GM10248 (cell line): ENCODE measurements at regions of chr11 and their contacts with region 1.

Region 1: DNA sequence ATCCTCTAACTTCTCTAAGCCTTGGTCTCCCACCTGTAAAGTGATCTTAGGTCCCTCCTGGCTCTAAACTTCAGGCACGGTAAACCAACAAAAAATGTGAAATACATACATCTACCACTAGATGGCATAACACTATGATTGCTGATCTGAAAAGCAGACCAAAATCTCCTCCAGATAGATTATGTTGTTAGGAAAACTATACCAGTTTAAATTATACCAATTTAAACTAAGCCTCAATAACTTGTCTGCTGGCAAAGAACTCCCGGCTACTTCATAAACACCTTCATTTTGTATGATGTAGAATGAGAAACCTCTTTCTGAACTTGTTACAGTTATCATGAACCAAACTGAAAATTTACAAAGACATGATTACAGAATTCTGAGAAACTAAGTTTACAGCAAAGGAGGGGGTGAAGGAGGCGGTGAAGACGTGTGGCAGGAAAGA is 85.9 kb downstream of the SBF2 start:
- DNase-seq: peak; percentile 52
- CTCF ChIP-seq: peak; percentile 67

Region 2: DNA sequence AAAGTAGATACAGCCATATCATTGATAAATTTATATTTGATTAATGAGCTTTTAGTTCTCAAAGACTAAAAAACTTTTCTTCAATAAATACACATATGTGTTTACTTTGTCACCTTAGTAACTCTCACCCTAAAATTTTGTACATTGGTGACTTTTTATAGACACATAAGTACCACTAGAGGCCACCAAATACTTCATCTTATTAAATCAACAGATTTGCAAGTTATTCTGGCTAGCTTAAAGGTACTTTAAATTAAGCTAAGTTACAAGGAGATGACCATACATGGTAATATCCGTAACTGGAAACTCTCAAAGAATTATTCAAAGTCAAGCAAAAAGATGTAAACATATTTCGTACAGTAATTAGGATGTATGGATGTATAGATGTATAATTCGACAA is 26.3 kb before region 1 on chr11:
- CTCF ChIA-PET with region 1: interaction called, 12 read pairs
- POLR2A ChIA-PET with region 1: no interaction called
- DNase-seq: peak; percentile 9
- CTCF ChIP-seq: no peak

Region 3: DNA sequence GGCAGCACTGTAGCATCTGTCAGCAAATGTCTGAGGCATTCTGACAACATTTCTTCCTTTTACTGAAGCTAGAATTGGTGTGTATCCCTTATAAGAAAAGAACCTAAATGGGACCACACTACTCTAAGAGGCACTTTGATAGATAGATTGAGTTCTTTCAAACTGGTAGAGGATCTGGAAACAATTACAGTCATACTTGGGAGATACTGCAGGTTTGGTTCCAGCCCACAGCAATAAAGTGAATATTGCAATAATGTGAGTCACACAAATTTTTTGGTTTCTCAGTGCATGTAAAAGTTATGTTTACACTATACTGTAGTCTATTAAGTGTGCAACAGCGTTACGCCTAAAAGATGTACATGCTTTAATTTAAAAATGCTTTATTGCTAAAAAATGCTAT is 11.1 kb before region 1 on chr11:
- CTCF ChIA-PET with region 1: interaction called, 19 read pairs
- POLR2A ChIA-PET with region 1: no interaction called
- DNase-seq: no peak
- CTCF ChIP-seq: no peak

Region 4: DNA sequence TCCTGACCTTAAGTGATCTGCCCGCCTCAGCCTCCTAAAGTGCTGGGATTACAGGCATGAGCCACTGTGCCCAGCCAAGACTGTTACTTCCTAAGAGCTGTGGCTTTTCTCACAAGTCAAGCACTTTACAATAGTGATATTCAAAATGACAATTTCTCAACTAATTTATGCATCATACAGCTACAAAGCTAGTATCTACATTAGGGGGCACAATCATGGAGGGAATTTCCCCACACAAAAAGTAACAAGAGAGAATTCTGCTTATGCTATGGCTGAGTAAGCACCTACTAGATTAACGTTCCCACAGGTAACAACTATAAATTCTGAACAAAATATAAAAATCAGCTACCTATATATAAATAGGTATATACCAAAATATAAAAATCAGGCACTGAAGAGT is 13.2 kb after region 1 on chr11:
- CTCF ChIA-PET with region 1: interaction called, 11 read pairs
- POLR2A ChIA-PET with region 1: no interaction called
- DNase-seq: no peak
- CTCF ChIP-seq: no peak

Region 5: GRCh38 chr11:10307442-10308207 is 99.5 kb after region 1 on chr11:
- CTCF ChIA-PET with region 1: interaction called, 68 read pairs
- POLR2A ChIA-PET with region 1: no interaction called
- DNase-seq: peak; percentile 81
- CTCF ChIP-seq: peak; percentile 96

Region 6: GRCh38 chr11:10322830-10323792 is 115.0 kb after region 1 on chr11:
- CTCF ChIA-PET with region 1: interaction called, 54 read pairs
- POLR2A ChIA-PET with region 1: no interaction called
- DNase-seq: peak; percentile 51
- CTCF ChIP-seq: peak; percentile 27